ENCODE measurements at regions of chr6 and their contacts with region 1.

Region 1: DNA sequence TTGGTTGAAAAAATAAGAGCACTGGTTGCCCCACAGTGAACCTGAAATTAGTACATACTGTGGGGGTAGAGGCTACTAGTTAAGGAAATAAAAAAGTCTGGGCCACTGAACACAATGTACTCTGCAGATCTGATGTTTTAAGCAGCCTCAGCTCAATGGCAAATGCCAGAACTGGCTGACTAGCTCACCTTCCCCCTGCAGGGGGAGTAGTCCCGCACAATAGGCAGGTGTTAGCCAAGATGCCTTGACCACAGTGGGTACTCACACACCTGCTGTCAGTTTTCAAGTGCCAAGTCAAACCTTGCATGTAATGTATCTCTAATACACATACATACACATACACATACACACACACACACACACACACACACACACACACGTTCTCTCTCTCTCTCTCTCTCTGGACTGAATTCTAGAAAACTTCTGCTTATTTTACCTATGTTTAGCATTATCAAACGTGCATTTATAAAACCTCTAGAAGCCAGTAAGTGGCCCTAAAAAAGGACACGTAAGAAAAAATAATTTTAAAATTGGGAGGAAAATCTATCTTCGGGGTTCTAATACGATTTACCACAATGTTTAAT is 36.1 kb downstream of the GMDS start:
- DNase-seq: peak; percentile 84
- H3K4me3 Mint-ChIP-seq: no peak overlapping the region
- H3K27ac Mint-ChIP-seq: no peak overlapping the region
- H3K4me1 Mint-ChIP-seq: no peaks in the 10 kb centered on the region
- H3K27me3 Mint-ChIP-seq: peaks cover 6% of the 10 kb centered on the region

Region 2: DNA sequence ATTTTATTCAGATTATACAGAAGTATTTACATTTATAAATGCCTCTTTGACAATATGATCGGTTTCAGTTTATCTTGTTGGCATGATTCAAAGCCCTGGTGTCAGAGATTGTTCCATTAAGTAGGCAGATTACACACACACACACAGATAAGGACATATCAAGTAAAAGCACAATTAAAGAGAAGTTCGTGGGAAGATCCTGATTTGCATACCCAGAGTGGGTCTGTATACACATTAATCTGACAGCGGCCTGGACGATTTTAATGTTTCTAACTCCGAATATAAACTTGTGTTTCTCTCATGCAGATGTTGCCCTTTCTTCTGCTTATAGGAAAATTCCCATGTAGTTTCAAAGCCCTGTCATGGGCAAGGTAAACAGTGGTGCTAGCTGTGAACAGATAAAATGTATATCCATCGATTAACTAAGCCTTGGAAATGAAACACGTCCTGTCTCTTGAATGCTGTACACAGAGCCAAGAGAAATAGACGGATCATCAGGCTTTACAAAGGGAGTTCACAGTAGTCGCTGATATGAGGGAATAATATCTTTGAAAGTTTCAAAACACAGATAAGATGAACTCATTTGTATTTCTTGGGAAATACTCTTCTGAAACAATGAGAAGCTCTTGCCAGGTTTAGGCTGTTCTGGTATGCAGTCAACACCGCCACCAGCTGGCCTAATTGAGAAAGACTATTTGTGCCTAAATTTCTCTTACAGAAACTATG is 144.3 kb after region 1 on chr6:
- intact Hi-C with region 1: loop called (anchors 1 kb)
- DNase-seq: peak; percentile 84
- H3K4me3 Mint-ChIP-seq: no peak overlapping the region
- H3K27ac Mint-ChIP-seq: no peak overlapping the region
- H3K4me1 Mint-ChIP-seq: no peaks in the 10 kb centered on the region
- H3K27me3 Mint-ChIP-seq: peaks cover 9% of the 10 kb centered on the region

Region 3: DNA sequence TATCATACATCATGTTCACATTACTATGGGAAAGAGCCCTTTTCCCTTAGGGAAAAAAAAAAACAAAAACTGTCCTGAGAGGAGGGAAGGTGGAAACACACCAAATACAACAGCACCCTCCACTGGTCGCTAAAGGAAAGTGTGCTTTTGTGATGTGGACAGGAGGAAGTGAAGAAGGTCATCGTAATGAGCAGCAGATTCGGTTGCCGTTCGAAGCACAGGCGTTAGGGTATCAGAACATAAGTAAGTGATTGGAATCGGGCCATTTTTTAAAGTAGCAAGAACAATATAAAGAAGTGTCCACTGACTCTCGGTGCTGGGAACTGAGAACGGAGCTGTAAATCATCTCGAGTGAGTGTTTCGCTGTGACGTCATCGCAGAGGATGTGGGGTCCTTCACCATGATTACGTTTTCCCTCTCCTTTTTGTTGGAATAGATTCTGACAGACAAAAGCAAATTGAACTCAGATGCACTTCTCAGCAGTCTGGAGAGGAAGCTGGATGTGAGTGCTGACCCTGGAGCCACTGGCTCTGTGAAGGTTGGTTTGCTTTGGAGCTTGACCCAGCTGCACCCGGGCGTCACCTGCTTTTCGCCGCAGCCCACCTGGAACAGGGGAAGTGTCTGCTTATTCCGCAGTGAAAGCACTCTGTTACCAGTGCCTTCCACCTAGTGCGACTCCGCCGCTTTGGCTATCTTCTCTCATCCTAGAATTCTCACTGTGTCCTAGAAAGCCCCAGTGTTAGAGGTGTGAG is 239.7 kb after region 1 on chr6:
- intact Hi-C with region 1: loop called (anchors 10 kb)
- DNase-seq: peak; percentile 70
- H3K4me3 Mint-ChIP-seq: peak overlapping the region; percentile 31
- H3K27ac Mint-ChIP-seq: no peak overlapping the region
- H3K4me1 Mint-ChIP-seq: peaks cover 3% of the 10 kb centered on the region
- H3K27me3 Mint-ChIP-seq: peaks cover 18% of the 10 kb centered on the region